Endothelial cell of umbilical vein (primary cell): ENCODE measurements at regions of chr12 and their contacts with region 1.

Region 1: DNA sequence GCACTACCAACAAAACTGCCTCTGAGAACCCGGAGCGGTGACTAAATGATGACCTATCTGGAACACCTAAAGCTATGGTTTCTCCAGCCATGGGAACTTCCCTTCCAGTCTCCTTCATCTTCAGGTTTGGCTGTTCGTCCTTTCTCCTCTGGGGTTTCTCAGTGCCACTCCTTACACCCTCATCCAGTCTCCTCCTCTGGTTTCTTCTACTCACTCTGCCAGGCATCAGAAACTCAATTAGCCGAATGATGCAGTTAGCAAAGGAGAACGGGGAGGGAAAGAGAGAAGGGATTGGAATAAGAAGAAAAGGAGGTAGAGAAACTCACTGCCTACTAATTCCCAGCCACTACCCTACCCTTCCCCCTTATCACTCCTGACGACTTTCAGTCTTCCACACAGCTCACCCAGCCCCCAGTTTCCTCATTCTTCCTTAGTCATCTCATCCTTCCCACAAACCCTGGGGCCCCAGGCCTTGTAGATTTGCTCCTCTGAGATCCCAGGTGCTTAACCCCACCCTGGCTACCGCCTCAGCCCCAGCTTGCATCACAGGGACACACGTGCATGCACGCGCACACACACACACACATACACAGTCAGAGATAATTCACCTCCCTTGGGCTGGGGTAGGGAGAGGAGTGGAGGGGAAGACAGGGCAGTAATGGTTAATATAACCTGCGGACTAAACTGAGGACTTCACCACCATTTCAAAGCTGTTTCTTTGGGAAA is 13.0 kb downstream of the FGD6 start:
- DNase-seq: peak; percentile 85
- H3K4me3 ChIP-seq: no peak overlapping the region
- H3K27ac ChIP-seq: peak overlapping the region; percentile 81
- H3K4me1 ChIP-seq: peaks cover 56% of the 10 kb centered on the region
- H3K27me3 ChIP-seq: no peaks in the 10 kb centered on the region
- CTCF ChIP-seq: no peak
- POLR2A ChIP-seq: no peak

Region 2: GRCh38 chr12:94397401-94397800 is 806.9 kb before region 1 on chr12:
- CTCF ChIA-PET with region 1: no interaction called
- POLR2A ChIA-PET with region 1: no interaction called
- dilution Hi-C with region 1: no loop called
- intact Hi-C with region 1: no loop called
- DNase-seq: no peak
- H3K4me3 ChIP-seq: no peak overlapping the region
- H3K27ac ChIP-seq: no peak overlapping the region
- H3K4me1 ChIP-seq: no peaks in the 10 kb centered on the region
- H3K27me3 ChIP-seq: no peaks in the 10 kb centered on the region
- CTCF ChIP-seq: no peak
- POLR2A ChIP-seq: no peak

Region 3: GRCh38 chr12:95169368-95169767 is 34.9 kb before region 1 on chr12:
- CTCF ChIA-PET with region 1: interaction called, 5 read pairs
- POLR2A ChIA-PET with region 1: no interaction called
- dilution Hi-C with region 1: no loop called
- intact Hi-C with region 1: loop called (anchors 1 kb)
- DNase-seq: peak; percentile 96
- H3K4me3 ChIP-seq: peak overlapping the region in 1 of 3 experiments; percentile 11
- H3K27ac ChIP-seq: peak overlapping the region; percentile 90
- H3K4me1 ChIP-seq: peaks cover 45% of the 10 kb centered on the region
- H3K27me3 ChIP-seq: no peaks in the 10 kb centered on the region
- CTCF ChIP-seq: no peak
- POLR2A ChIP-seq: peak; percentile 48

Region 4: GRCh38 chr12:95545731-95546490 is 341.6 kb after region 1 on chr12:
- CTCF ChIA-PET with region 1: no interaction called
- POLR2A ChIA-PET with region 1: no interaction called
- dilution Hi-C with region 1: no loop called
- intact Hi-C with region 1: no loop called
- DNase-seq: peak; percentile 69
- H3K4me3 ChIP-seq: no peak overlapping the region
- H3K27ac ChIP-seq: no peak overlapping the region
- H3K4me1 ChIP-seq: peaks cover 19% of the 10 kb centered on the region
- H3K27me3 ChIP-seq: peaks cover 4 to 14% of the 10 kb centered on the region in 2 experiments
- CTCF ChIP-seq: no peak
- POLR2A ChIP-seq: no peak